Right ventricle myocardium superior (tissue), 1 donor: ENCODE measurements at regions of chr22 and their contacts with region 1.

Region 1: GRCh38 chr22:20833225-20833665 is 25.4 kb downstream of the PI4KA start:
- DNase-seq: no peak
- ATAC-seq: peak; percentile 18

Region 2: GRCh38 chr22:20783844-20784723 is 49.2 kb before region 1 on chr22:
- intact Hi-C with region 1: loop called (anchors 10 kb)
- DNase-seq: no peak
- ATAC-seq: peak; percentile 37

Region 3: DNA sequence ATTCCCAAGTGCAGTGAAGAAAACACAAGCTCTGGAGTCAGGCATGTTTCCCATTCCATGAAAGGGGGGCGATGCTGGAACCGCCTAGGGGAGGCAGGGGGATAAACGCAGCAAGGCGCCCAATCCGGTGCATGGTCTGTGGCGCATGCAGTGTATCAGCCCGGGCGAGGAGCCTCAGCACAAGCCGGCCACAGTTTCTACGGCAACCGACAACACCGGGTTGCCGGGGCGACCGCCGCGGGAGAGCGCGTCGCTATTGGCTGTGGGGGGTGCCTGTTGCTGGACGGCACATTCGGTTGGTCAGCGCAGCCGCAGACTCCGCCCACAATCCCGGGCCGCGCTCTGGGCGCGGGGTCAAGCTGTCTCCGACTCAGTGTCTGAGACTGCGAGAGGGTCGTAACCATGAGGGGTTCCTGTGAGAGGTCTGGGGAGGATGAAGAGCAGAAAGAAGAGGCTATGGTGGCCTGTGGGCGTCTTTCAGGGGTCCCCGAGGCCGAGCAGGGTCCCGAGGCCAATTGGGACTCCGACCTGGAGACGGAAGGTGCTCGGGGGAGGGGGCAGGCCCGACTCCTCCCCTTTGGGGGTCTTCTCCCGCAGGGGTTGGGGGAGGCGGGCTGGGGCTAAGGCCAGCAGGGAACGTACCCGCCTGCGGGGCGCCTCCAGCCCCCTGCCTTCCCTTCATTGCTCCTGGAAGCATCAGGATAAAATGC is 212.5 kb after region 1 on chr22 and contains the start of gene LRRC74B:
- intact Hi-C with region 1: no loop called
- DNase-seq: peak; percentile 94
- ATAC-seq: peak; percentile 98
- total RNA-seq, gene LRRC74B: not detected